Naive thymus-derived CD4-positive, alpha-beta T cell (primary cell): ENCODE measurements at regions of chr7 and their contacts with region 1.

Region 1: DNA sequence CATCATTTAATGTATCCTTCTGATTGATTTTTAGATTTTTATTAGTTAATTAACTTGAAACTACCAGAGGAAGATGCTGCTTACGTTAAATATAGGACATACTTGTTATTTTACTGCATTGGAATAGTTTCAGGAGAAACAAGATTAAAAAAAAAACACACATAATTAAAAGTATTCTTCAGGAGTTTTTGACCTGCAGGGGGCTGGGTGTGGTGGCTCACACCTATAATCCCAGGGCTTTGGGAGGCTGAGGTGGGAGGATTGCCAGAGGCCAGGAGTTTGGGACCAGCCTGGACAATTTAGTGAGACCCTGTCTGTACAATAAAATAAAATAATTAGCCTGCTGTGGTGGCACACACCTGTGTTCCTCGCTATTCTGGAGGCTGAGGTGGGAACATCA is 10.7 kb downstream of the CBLL1 start:
- DNase-seq: no peak
- ATAC-seq: no peak
- H3K4me3 ChIP-seq: no peak overlapping the region
- H3K4me3 Mint-ChIP-seq: no peak overlapping the region
- H3K27ac ChIP-seq: peak overlapping the region; percentile 8
- H3K27ac Mint-ChIP-seq: no peak overlapping the region
- H3K4me1 ChIP-seq: no peaks in the 10 kb centered on the region
- H3K4me1 Mint-ChIP-seq: peaks cover 9 to 29% (median 22%) of the 10 kb centered on the region in 7 donors
- H3K27me3 ChIP-seq: no peaks in the 10 kb centered on the region
- H3K27me3 Mint-ChIP-seq: no peaks in the 10 kb centered on the region

Region 2: DNA sequence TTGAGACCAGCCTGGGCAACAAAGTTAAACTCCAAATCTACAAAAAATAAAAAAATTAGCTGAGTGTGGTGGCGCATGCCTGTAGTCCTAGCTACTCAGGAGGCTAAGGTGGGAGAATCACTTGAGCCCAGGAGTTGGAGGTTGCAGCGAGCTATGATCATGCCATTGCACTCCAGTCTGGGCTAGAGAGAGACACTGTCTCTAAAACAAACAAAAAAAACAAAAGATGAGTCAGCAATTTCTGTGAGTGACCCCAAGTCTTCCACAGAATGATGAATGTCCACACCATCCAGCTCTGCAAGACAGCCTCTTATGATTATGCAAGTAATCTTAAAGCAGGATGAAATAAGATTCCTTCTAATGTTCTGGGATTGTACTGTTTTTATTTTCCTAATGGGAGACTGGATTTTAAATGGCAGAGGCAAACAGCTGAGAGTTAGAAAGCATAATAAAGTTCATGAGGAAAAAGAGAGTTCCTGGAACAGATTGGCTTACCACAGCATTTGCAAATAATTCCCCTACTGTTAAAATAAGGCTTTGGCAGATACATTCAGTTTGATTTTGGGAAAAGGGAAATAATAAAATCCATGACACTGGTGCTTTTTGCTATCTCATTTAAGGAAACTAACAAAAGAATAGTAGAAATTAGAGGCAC is 729.1 kb before region 1 on chr7:
- CTCF ChIA-PET with region 1: no interaction called
- POLR2A ChIA-PET with region 1: no interaction called
- intact Hi-C with region 1: loop called in 1 of 2 experiments (anchors 5 kb)
- DNase-seq: no peak
- ATAC-seq: no peak
- H3K4me3 ChIP-seq: no peak overlapping the region
- H3K4me3 Mint-ChIP-seq: no peak overlapping the region
- H3K27ac ChIP-seq: no peak overlapping the region
- H3K27ac Mint-ChIP-seq: no peak overlapping the region
- H3K4me1 ChIP-seq: no peaks in the 10 kb centered on the region
- H3K4me1 Mint-ChIP-seq: peaks cover 0 to 6% (median 0%) of the 10 kb centered on the region in 7 donors
- H3K27me3 ChIP-seq: no peaks in the 10 kb centered on the region
- H3K27me3 Mint-ChIP-seq: peaks cover 0 to 15% (median 0%) of the 10 kb centered on the region in 5 donors

Region 3: DNA sequence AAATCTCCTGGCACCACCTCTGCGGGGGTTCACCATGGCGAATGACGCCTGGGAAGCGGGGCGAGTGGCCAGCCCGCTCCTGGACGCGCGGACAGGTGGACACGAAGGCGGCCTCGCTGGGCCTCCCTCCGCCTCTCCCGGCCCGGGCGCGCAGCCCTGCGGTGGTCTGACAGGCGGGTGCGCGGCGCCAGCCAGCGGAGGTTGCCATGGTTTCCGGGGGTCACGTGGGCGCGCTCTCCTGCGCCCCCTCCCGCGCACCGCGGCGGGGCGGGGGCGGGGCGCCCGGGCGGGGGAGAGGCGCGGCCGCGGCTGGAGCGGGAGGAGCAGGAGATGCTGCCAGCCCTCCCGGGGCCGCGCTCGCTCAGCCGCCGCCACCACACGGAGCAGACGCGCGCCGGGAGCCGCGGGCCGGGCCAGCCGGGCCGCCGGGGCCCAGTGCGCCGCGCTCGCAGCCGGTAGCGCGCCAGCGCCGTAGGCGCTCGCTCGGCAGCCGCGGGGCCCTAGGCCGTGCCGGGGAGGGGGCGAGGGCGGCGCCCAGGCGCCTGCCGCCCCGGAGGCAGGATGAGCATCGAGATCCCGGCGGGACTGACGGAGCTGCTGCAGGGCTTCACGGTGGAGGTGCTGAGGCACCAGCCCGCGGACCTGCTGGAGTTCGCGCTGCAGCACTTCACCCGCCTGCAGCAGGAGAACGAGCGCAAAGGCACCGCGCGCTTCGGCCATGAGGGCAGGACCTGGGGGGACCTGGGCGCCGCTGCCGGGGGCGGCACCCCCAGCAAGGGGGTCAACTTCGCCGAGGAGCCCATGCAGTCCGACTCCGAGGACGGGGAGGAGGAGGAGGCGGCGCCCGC is 710.1 kb before region 1 on chr7 and contains the start of gene PRKAR2B:
- CTCF ChIA-PET with region 1: no interaction called
- POLR2A ChIA-PET with region 1: no interaction called
- intact Hi-C with region 1: no loop called
- DNase-seq: peak; percentile 69 to 81 (median 79)
- ATAC-seq: peak; percentile 96
- H3K4me3 ChIP-seq: peak within 1 kb of the TSS; percentile 53
- H3K4me3 Mint-ChIP-seq: peak within 1 kb of the TSS; percentile 78 to 96 (median 90)
- H3K27ac ChIP-seq: peak within 1 kb of the TSS; percentile 33
- H3K27ac Mint-ChIP-seq: peak within 1 kb of the TSS in 7 of 9 donors; percentile 48 to 89 (median 77)
- H3K4me1 ChIP-seq: peaks cover 4 to 10% of the 10 kb centered on the region in 2 donors
- H3K4me1 Mint-ChIP-seq: peaks cover 11 to 19% (median 15%) of the 10 kb centered on the region in 7 donors
- H3K27me3 ChIP-seq: peaks cover 4 to 8% of the 10 kb centered on the region in 2 donors
- H3K27me3 Mint-ChIP-seq: peaks cover 13 to 47% (median 29%) of the 10 kb centered on the region in 5 donors
- total RNA-seq, gene PRKAR2B: 0.43 to 5.0 (median 0.67) TPM

Region 4: GRCh38 chr7:107725151-107725740 is 29.4 kb before region 1 on chr7:
- CTCF ChIA-PET with region 1: no interaction called
- POLR2A ChIA-PET with region 1: no interaction called
- intact Hi-C with region 1: no loop called
- DNase-seq: peak in 7 of 9 donors; percentile 23 to 56 (median 46)
- ATAC-seq: no peak
- H3K4me3 ChIP-seq: no peak overlapping the region
- H3K4me3 Mint-ChIP-seq: no peak overlapping the region
- H3K27ac ChIP-seq: no peak overlapping the region
- H3K27ac Mint-ChIP-seq: no peak overlapping the region
- H3K4me1 ChIP-seq: no peaks in the 10 kb centered on the region
- H3K4me1 Mint-ChIP-seq: no peaks in the 10 kb centered on the region
- H3K27me3 ChIP-seq: peaks cover 0 to 3% of the 10 kb centered on the region in 2 donors
- H3K27me3 Mint-ChIP-seq: peaks cover 9 to 29% (median 17%) of the 10 kb centered on the region in 5 donors